ENCODE measurements at regions of chr10 and their contacts with region 1.

Region 1: DNA sequence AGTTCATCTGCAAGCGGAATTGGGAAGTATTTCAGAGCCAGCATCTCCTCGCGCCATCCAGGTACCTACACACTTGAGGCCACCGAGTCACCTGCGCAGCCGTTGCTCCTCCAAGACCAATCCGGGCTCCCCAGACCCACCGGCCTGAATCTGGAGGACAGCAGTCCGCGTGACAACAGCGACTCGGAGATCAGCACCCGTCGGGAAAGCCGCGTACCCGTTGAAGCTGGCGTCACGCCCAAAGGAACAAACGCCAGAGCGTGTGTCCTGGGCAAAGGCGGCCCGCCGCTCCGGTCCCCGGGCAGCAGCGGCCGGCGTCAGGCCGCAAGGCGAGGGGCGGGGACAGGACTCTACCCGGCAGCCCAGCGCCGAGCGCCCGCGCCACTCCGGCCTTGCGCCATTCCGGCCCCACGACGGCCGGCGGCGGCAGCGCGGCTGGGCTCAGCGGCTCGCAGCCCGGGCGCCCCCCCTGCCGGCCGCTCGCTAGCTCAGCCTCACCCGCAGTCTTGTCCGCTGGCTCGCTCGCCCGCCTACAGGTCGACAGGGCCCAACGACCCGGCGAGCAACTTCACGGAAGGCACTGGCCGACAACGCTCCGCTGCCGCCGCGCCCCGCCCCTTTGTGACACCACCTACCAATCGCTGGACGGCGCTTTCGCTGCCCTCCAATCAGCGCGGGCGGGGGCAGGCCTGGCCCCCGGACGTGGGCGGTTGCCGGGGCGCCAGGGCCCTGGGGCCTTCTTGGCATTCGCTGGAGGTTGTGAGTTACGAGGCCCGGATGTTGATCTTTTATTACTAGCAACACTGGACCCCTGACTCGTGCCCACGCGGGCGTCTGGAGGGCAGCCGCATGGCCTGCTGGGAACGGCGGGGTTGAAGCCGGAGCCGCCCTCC is at the start of gene ZFAND4:
- DNase-seq: peak; percentile 97
- ATAC-seq: peak; percentile 96
- H3K4me3 Mint-ChIP-seq: peak within 1 kb of the TSS; percentile 88
- H3K27ac Mint-ChIP-seq: peak within 1 kb of the TSS; percentile 86
- H3K4me1 Mint-ChIP-seq: peaks cover 28% of the 10 kb centered on the region
- H3K27me3 Mint-ChIP-seq: no peaks in the 10 kb centered on the region
- total RNA-seq, gene ZFAND4: 22.3 to 24.3 TPM

Region 2: DNA sequence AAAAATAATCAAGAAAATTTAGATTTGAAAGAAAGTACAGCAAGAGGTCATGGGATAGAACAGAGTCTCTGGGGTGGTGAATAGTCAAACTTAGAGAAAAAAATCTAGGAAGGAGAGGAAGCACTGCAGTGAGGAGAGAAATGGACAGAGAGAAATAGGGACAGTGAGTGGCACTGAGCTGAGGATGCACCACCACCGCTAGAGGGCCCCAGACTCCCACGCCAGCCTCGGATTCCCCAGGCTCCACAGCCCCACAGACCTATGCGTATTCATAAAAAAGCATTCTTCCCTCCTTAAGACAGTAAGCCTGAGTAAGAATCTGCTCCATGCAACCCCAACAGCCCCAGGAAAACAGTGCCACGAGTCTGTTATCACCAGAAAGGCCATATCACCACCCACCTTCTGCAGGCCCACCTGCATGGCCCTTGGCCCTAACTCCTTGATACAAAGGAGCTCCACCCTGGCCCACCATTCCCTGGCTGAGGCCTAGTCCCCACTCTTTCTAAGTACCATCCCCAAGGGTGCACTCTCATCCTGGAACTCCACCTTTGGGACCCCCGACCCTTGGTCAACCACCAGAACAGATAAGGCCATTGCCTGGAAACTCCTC is 207.4 kb before region 1 on chr10:
- POLR2A ChIA-PET with region 1: interaction called, 18 read pairs
- DNase-seq: peak; percentile 83
- ATAC-seq: peak; percentile 98
- H3K4me3 Mint-ChIP-seq: peak overlapping the region; percentile 15
- H3K27ac Mint-ChIP-seq: peak overlapping the region; percentile 67
- H3K4me1 Mint-ChIP-seq: peaks cover 49% of the 10 kb centered on the region
- H3K27me3 Mint-ChIP-seq: no peaks in the 10 kb centered on the region

Region 3: DNA sequence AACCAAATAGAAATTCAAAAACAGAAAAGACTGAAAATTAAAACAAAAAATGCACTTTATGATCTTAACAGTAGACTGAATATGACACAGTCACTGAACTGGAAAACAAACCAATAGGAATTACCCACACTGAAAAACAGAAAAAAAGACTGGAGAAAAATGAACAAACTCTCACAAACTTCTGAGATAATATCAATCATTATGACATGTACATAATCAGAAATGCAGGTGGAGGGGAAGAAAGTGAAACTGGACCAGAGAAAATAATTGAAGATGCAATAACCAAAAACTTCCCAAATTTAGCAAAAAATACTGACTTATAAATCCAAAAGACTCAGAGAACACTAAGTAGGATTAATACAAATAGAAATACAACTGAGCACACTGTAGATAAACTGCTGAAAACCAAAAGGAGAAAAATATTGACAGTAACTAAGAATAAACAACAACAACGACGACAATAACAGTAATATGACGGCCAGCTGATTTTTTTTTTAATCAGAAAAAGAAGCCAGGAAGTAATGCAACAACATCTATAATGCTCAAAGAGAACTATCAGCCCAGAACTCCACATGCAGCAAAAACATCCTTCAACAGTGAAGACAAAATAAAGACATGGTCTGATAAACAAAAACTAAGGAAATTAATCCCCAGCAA is 108.0 kb before region 1 on chr10:
- POLR2A ChIA-PET with region 1: no interaction called
- DNase-seq: no peak
- ATAC-seq: no peak
- H3K4me3 Mint-ChIP-seq: no peak overlapping the region
- H3K27ac Mint-ChIP-seq: no peak overlapping the region
- H3K4me1 Mint-ChIP-seq: peaks cover 14% of the 10 kb centered on the region
- H3K27me3 Mint-ChIP-seq: no peaks in the 10 kb centered on the region

Region 4: GRCh38 chr10:45640941-45641340 is 31.5 kb before region 1 on chr10:
- POLR2A ChIA-PET with region 1: no interaction called
- DNase-seq: no peak
- ATAC-seq: no peak
- H3K4me3 Mint-ChIP-seq: no peak overlapping the region
- H3K27ac Mint-ChIP-seq: no peak overlapping the region
- H3K4me1 Mint-ChIP-seq: no peaks in the 10 kb centered on the region
- H3K27me3 Mint-ChIP-seq: no peaks in the 10 kb centered on the region

Measured in activated naive CD8-positive, alpha-beta T cell treated with anti-CD3 and anti-CD28 coated beads, Interleukin-2, amount 10 ng/mL, durations not matched to agents 7 days and 5 days (primary cell).